Aorta (tissue), 5 donors: ENCODE measurements at regions of chr3 and their contacts with region 1.

Region 1: GRCh38 chr3:192514081-192514753 is 213.1 kb downstream of the FGF12 start:
- DNase-seq: peak in 1 of 2 donors; percentile 78
- ATAC-seq: no peak
- H3K4me3 ChIP-seq: peak overlapping the region in 1 of 2 donors; percentile 22
- H3K27ac ChIP-seq: no peak overlapping the region
- H3K4me1 ChIP-seq: no peaks in the 10 kb centered on the region
- H3K27me3 ChIP-seq: peaks cover 0 to under 1% of the 10 kb centered on the region in 2 donors

Region 2: DNA sequence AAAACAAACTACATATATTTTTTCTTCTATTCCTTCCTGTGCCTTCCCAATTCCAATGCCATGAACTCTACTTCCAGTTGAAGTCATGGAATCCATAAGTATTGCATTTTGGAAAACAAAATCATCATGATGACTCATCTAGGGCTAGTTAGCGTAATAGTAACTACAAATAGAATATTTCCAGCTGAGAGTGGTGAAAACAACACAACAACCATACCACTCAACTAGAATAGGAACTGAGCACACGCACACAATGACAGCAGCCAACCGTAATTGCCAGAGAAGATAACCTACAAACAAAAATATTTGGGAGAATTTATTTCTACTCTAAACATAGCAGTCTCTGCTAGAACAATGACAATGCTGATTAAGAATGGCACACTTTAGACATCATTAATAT is 12.8 kb before region 1 on chr3:
- intact Hi-C with region 1: loop called in 1 of 2 experiments (anchors 2 kb)
- DNase-seq: no peak
- ATAC-seq: no peak
- H3K4me3 ChIP-seq: no peak overlapping the region
- H3K27ac ChIP-seq: no peak overlapping the region
- H3K4me1 ChIP-seq: no peaks in the 10 kb centered on the region
- H3K27me3 ChIP-seq: no peaks in the 10 kb centered on the region